ENCODE measurements at regions of chrX and their contacts with region 1.

Region 1: GRCh38 chrX:43969504-43970501 is 3.4 kb downstream of the NDP start:
- DNase-seq: peak in 31 of 42 donors; percentile 9 to 69 (median 37)

Region 2: DNA sequence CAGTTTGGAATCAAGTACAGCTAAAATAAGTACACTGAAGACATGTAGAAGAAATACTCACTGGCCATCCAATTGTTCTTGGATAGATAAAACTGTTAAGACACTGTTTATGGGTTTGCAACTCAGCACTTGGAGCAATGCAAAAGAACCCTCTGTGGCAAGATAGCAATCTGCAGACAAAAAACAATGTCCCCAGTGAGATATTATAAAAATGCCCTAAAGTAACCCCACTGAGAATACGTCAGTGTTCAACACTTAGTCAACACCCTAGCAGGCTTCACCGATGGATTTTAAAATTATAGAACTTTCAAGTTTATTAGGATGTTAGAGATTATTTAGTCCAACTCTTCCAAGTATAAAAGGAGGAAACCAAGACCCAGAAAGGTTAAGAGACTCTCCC is 50.9 kb after region 1 on chrX:
- intact Hi-C with region 1: loop called (anchors 5 kb)
- DNase-seq: no peak

Region 3: GRCh38 chrX:45022150-45022549 is 1052.3 kb after region 1 on chrX:
- intact Hi-C with region 1: loop called (anchors 5 kb)
- DNase-seq: no peak

Measured in head of caudate nucleus (tissue), 42 donors.